Activated B cell treated with CpG ODN at 0.5 μM for 24 hours (primary cell): ENCODE measurements at regions of chr1 and their contacts with region 1.

Region 1: GRCh38 chr1:37323486-37324377 is 150.6 kb upstream of the ZC3H12A start:
- DNase-seq: no peak
- ATAC-seq: no peak
- H3K4me3 Mint-ChIP-seq: no peak overlapping the region
- H3K27ac Mint-ChIP-seq: no peak overlapping the region
- H3K4me1 Mint-ChIP-seq: peaks cover 17% of the 10 kb centered on the region
- H3K27me3 Mint-ChIP-seq: peaks cover 13% of the 10 kb centered on the region
- CTCF ChIP-seq: peak; percentile 63

Region 2: GRCh38 chr1:36576118-36576517 is 747.6 kb before region 1 on chr1:
- CTCF ChIA-PET with region 1: interaction called, 8 read pairs
- POLR2A ChIA-PET with region 1: no interaction called
- intact Hi-C with region 1: loop called (anchors 1 kb)
- DNase-seq: peak; percentile 46
- ATAC-seq: peak; percentile 62
- H3K4me3 Mint-ChIP-seq: no peak overlapping the region
- H3K27ac Mint-ChIP-seq: no peak overlapping the region
- H3K4me1 Mint-ChIP-seq: no peaks in the 10 kb centered on the region
- H3K27me3 Mint-ChIP-seq: peaks cover 29% of the 10 kb centered on the region
- CTCF ChIP-seq: no peak

Region 3: GRCh38 chr1:36864182-36864822 is 459.4 kb before region 1 on chr1:
- CTCF ChIA-PET with region 1: interaction called, 3 read pairs
- POLR2A ChIA-PET with region 1: no interaction called
- intact Hi-C with region 1: loop called (anchors 10 kb)
- DNase-seq: no peak
- ATAC-seq: no peak
- H3K4me3 Mint-ChIP-seq: no peak overlapping the region
- H3K27ac Mint-ChIP-seq: no peak overlapping the region
- H3K4me1 Mint-ChIP-seq: no peaks in the 10 kb centered on the region
- H3K27me3 Mint-ChIP-seq: peaks cover 11% of the 10 kb centered on the region
- CTCF ChIP-seq: no peak

Region 4: DNA sequence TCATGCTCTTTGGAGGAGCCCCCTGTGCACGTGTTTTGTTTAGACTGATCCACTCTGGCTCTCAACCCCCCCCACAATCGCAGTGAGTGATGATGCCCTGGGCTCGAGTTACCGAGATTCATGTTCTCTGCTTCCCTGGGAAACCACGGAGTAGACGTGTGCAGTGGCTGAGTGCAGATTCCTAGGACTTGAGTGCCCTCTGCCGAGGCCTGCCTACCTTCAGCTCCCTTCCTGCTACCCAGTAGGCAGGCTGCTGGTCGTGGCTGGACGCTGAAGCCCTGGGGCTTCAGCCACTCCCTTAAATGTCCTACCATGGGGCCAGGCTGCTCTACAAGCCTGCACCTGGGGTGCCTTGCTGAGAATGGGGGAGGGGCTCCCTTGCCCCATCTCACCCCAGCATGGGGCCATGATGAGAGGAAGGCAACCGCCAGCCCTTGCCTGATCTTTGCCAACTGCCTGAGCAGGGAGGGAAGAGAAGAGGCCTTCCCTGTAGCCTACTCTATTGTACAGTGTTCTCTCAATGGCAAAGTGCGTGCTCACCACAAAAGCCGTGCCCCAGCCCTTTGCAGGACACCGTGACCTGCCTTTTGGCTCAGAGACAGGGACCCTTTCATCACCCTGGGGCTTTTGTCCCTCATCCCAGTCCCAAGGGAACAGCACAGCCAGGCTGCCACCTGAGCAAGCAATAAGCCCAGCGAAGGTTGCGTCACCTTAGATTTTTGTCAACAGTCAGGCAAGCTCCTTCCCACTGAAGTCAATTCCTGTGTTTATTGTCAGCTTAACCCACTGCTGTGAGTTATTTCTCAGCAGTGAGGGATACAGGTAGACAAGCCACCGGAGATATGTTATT is 285.3 kb before region 1 on chr1:
- CTCF ChIA-PET with region 1: interaction called, 10 read pairs
- POLR2A ChIA-PET with region 1: no interaction called
- intact Hi-C with region 1: loop called (anchors 2 kb)
- DNase-seq: no peak
- ATAC-seq: no peak
- H3K4me3 Mint-ChIP-seq: no peak overlapping the region
- H3K27ac Mint-ChIP-seq: no peak overlapping the region
- H3K4me1 Mint-ChIP-seq: peaks cover 23% of the 10 kb centered on the region
- H3K27me3 Mint-ChIP-seq: peaks cover 62% of the 10 kb centered on the region
- CTCF ChIP-seq: no peak

Region 5: GRCh38 chr1:37096466-37096865 is 227.3 kb before region 1 on chr1:
- CTCF ChIA-PET with region 1: interaction called, 3 read pairs
- POLR2A ChIA-PET with region 1: no interaction called
- intact Hi-C with region 1: loop called (anchors 1 kb)
- DNase-seq: no peak
- ATAC-seq: no peak
- H3K4me3 Mint-ChIP-seq: no peak overlapping the region
- H3K27ac Mint-ChIP-seq: no peak overlapping the region
- H3K4me1 Mint-ChIP-seq: peaks cover 29% of the 10 kb centered on the region
- H3K27me3 Mint-ChIP-seq: peaks cover 4% of the 10 kb centered on the region
- CTCF ChIP-seq: no peak

Region 6: GRCh38 chr1:37914719-37915475 is 591.2 kb after region 1 on chr1:
- CTCF ChIA-PET with region 1: no interaction called
- POLR2A ChIA-PET with region 1: no interaction called
- intact Hi-C with region 1: no loop called
- DNase-seq: no peak
- ATAC-seq: no peak
- H3K4me3 Mint-ChIP-seq: no peak overlapping the region
- H3K27ac Mint-ChIP-seq: no peak overlapping the region
- H3K4me1 Mint-ChIP-seq: peaks cover 20% of the 10 kb centered on the region
- H3K27me3 Mint-ChIP-seq: no peaks in the 10 kb centered on the region
- CTCF ChIP-seq: no peak